Dorsolateral prefrontal cortex (tissue), 120 donors: ENCODE measurements at regions of chr14 and their contacts with region 1.

Region 1: DNA sequence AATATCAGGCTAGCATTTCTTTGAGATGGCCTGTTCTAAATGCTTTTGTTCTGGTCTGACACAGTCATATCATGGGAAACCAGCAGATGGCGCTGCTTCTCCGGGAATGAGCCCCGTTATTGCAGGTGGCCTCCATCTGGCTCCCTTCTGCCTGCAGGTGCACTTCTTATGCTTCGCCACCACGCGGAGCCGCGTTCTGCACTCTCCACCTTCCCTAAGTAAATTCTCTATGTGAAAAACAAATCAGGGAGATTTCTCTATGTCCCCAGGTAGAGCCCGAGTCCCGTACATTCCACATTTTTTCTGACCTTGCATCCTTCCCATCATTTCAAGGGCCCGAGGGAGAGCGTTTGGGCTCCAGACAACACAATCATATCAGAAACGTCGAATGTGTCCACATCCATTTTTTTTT is 26.2 kb downstream of the GLRX5 start:
- DNase-seq: peak; percentile 73 to 94 (median 88)
- H3K4me3 ChIP-seq: peak overlapping the region in 3 of 59 donors; percentile 2 to 9 (median 6)
- H3K27ac ChIP-seq: no peak overlapping the region
- H3K27me3 ChIP-seq: no peaks in the 10 kb centered on the region
- CTCF ChIP-seq: peak; percentile 89 to 100 (median 98)

Region 2: GRCh38 chr14:95597784-95598211 is 36.8 kb after region 1 on chr14:
- intact Hi-C with region 1: no loop called
- DNase-seq: peak in 8 of 10 donors; percentile 11 to 69 (median 47)
- H3K4me3 ChIP-seq: peak overlapping the region in 56 of 59 donors; percentile 3 to 58 (median 34)
- H3K27ac ChIP-seq: peak overlapping the region in 1 of 59 donors; percentile 2
- H3K27me3 ChIP-seq: peaks cover 0 to 27% (median 0%) of the 10 kb centered on the region in 45 donors
- CTCF ChIP-seq: no peak

Region 3: DNA sequence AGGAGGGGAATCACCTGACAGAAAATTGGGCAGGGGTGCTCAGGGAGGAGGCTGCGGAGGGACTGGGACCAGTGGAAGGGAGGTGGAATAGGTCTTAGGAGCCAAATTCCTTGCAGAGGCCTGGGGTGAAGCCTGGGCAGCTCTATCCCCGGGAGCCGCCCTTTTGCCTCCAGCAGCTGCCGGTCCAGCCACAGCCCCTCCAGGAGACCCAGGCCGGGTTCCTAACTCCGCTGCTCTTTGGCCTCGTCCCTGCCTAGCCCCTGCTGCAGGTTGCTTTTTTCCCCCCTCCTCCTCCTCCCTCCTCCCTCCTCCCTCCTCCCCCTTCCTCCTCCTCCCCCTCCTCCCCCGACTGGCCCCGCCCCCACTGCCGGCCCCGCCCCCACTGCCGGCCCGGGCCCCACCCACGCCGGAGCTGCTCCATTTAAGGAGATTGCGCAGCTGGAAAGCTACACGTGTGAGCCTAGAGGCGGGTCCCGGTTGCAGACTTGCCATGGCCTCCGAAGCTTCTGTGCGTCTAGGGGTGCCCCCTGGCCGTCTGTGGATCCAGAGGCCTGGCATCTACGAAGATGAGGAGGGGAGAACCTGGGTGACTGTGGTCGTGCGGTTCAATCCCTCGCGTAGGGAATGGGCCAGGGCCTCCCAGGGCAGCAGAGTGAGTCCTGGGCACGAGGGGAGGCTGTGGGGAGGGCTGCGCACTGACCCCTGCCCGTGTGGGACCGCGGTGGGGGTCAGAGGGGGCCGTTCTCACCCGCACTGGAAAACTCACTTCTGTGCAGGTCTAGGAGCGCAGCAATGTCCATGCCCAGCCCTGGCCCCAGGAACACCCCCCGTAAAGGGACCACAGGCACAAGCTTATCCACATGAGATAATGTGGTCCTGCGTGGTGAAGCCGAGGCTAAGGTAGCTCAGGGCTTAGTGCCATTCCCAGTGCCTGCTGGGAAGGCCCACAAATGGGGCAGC is 125.3 kb after region 1 on chr14 and contains the start of gene TCL1B:
- intact Hi-C with region 1: no loop called
- DNase-seq: no peak
- H3K4me3 ChIP-seq: no peak within 1 kb of the TSS
- H3K27ac ChIP-seq: no peak within 1 kb of the TSS
- H3K27me3 ChIP-seq: peaks cover 0 to 32% (median 7%) of the 10 kb centered on the region in 45 donors
- CTCF ChIP-seq: no peak
- total RNA-seq, gene TCL1B: not detected

Region 4: DNA sequence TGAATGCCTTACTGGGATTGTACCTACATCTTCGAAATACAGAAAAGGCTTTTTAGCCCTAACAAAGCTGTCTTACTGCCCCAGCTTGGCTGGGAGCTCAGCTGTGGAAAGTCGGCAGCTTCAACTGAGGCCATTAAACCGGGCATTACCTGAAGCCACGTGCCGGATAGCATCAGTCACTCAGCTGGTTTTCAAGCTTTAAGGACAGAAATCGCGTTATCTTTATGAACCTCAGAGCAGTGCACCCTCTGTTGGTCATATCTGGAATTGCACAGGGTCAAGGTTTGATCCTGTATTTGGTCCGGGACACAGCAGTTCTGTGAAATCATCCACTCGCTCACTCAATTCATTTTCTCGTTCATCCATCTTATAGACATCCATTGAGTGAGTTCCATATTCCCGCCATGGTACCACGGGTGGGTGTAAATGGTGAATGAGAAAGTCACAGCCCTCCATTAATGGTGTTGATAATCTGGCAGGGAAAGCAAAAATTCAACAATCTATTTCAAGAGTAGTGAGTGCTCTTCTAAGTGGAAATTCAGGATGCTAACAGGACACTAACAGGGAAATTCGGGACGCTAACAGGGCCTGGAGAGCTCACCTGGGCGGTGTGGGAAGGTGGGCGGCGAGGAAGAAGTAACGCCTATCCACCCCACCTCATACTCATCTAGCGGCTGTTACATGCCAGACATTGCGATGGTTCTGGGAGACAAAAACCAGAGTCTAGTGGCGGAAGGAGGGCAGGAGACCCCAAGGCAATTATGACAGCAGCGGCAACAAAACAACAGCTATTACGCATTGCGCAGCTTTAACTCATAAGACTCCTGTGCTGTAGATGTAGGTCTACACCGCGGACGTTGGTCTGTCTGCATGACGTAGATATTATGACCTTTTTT is 213.5 kb after region 1 on chr14:
- intact Hi-C with region 1: loop called (anchors 2 to 5 kb)
- DNase-seq: peak in 4 of 10 donors; percentile 10 to 52 (median 37)
- H3K4me3 ChIP-seq: no peak overlapping the region
- H3K27ac ChIP-seq: no peak overlapping the region
- H3K27me3 ChIP-seq: peaks cover 0 to 11% (median 0%) of the 10 kb centered on the region in 45 donors
- CTCF ChIP-seq: peak; percentile 64 to 94 (median 86)